ENCODE measurements at regions of chr17 and their contacts with region 1.

Region 1: GRCh38 chr17:14409292-14409691 is 108.4 kb downstream of the HS3ST3B1 start:
- DNase-seq: no peak
- H3K4me3 Mint-ChIP-seq: no peak overlapping the region
- H3K27ac Mint-ChIP-seq: no peak overlapping the region
- H3K4me1 Mint-ChIP-seq: peaks cover 12% of the 10 kb centered on the region
- H3K27me3 Mint-ChIP-seq: no peaks in the 10 kb centered on the region

Region 2: GRCh38 chr17:14359163-14360020 is 49.9 kb before region 1 on chr17:
- CTCF ChIA-PET with region 1: no interaction called
- intact Hi-C with region 1: loop called (anchors 1 kb)
- DNase-seq: peak; percentile 61
- H3K4me3 Mint-ChIP-seq: no peak overlapping the region
- H3K27ac Mint-ChIP-seq: no peak overlapping the region
- H3K4me1 Mint-ChIP-seq: peaks cover 15% of the 10 kb centered on the region
- H3K27me3 Mint-ChIP-seq: no peaks in the 10 kb centered on the region